Activated CD4-positive, alpha-beta memory T cell treated with anti-CD3 and anti-CD28 coated beads, Interleukin-2, amount 10 ng/mL, durations not matched to agents 7 days and 5 days (primary cell): ENCODE measurements at regions of chr19 and their contacts with region 1.

Region 1: GRCh38 chr19:13277104-13277809 is 127.0 kb downstream of the IER2 start:
- DNase-seq: peak; percentile 74
- H3K4me3 Mint-ChIP-seq: peak overlapping the region; percentile 38
- H3K27ac Mint-ChIP-seq: peak overlapping the region; percentile 87
- H3K4me1 Mint-ChIP-seq: peaks cover 31% of the 10 kb centered on the region
- H3K27me3 Mint-ChIP-seq: no peaks in the 10 kb centered on the region

Region 2: GRCh38 chr19:13262450-13262849 is 14.8 kb before region 1 on chr19:
- CTCF ChIA-PET with region 1: interaction called, 18 read pairs
- POLR2A ChIA-PET with region 1: interaction called, 4 read pairs
- DNase-seq: peak; percentile 21
- H3K4me3 Mint-ChIP-seq: no peak overlapping the region
- H3K27ac Mint-ChIP-seq: no peak overlapping the region
- H3K4me1 Mint-ChIP-seq: peaks cover 20% of the 10 kb centered on the region
- H3K27me3 Mint-ChIP-seq: peaks cover 26% of the 10 kb centered on the region

Region 3: GRCh38 chr19:13334801-13335481 is 57.7 kb after region 1 on chr19:
- CTCF ChIA-PET with region 1: interaction called, 15 read pairs
- POLR2A ChIA-PET with region 1: no interaction called
- DNase-seq: no peak
- H3K4me3 Mint-ChIP-seq: no peak overlapping the region
- H3K27ac Mint-ChIP-seq: no peak overlapping the region
- H3K4me1 Mint-ChIP-seq: no peaks in the 10 kb centered on the region
- H3K27me3 Mint-ChIP-seq: no peaks in the 10 kb centered on the region

Region 4: DNA sequence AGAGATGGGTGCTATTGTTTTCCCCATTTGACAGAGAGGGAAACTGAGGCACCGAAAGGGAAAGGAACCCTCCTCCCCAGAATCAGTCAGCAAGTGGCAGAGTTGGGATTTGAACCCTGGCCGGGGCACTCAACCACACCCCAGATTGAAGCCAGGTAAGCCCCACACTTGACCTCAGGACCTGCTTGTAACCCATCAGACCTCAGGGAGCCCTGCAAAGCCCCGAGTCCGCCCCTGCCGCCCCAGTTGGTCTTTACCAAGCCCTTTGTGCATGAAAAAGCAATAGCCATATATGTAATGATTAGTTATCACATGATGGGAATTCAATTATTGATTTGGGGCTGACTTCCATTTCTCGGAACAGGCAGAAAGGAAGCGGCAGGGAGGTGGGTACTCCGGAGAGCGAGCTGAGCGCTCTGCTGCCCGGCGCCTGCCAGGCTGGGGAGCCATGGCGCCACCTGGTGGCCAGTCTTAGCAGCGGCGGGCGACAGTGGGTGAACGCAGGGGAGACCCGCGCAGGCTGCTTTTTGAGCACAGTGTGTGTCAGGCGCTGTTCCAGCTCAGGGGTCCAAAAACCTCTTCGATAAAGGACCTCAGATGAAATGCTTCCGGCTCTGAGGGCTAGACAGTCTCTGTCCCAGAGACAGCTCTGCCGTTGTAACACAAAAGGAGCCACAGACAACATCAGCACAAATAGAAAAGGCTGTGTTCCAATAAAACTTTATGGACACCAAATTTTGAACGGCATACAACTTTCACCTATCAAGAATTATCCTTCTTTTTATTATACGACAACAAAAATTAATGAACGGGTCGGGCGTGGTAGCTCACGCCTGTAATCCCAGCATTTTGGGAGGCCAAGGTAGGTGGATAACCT is 311.9 kb after region 1 on chr19:
- CTCF ChIA-PET with region 1: interaction called, 43 read pairs
- POLR2A ChIA-PET with region 1: no interaction called
- DNase-seq: peak; percentile 81
- H3K4me3 Mint-ChIP-seq: no peak overlapping the region
- H3K27ac Mint-ChIP-seq: no peak overlapping the region
- H3K4me1 Mint-ChIP-seq: no peaks in the 10 kb centered on the region
- H3K27me3 Mint-ChIP-seq: no peaks in the 10 kb centered on the region